HEK293T (cell line): ENCODE measurements at regions of chr11 and their contacts with region 1.

Region 1: GRCh38 chr11:1763796-1764661 is at the start of gene CTSD:
- DNase-seq: peak; percentile 97

Region 2: DNA sequence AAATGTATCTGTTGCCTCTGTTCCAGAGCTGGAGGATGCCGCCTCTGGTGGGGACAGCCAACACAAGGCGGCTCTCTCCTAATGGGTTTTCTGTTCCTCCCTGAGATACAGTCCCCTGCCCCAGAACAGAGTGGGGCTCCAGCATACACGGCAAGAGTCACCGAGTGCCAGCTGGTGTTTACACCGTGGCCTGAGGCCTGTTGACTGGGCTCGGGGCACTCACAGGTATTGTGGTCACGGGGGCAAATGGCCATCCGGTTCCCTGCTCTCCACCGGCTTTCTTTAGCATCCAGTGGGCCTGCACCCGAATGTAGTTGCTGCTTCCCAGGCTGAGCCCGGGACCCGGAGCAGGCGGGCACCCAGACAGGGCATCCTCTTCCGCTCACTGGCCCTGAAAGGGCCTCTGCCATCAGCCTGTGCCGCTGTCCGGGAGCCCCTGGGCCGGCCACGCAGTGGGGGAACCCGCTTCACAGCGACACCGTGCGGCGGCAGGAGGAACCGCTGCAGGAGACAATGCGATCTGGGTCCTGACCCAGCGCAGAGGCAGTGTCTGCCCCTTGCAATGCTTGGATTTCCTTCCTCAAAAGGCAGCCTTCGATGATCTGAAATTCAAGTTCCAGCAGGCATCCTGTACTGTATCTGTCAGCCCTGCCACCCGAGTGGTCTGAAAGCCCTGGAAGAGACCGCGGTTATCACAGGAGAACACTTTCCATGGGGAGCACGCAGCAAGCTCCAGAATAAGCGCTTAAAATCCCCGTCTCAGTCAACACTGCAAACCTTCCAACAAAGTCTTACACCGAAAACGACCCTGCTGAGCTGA is 135.3 kb before region 1 on chr11:
- CTCF ChIA-PET with region 1: no interaction called
- POLR2A ChIA-PET with region 1: no interaction called
- DNase-seq: peak; percentile 89

Region 3: GRCh38 chr11:1682225-1682905 is 81.7 kb before region 1 on chr11:
- CTCF ChIA-PET with region 1: no interaction called
- POLR2A ChIA-PET with region 1: no interaction called
- DNase-seq: no peak

Region 4: GRCh38 chr11:1749414-1750312 is 14.4 kb before region 1 on chr11:
- CTCF ChIA-PET with region 1: no interaction called
- POLR2A ChIA-PET with region 1: interaction called, 10 read pairs
- DNase-seq: no peak

Region 5: GRCh38 chr11:1796413-1797011 is 32.5 kb after region 1 on chr11:
- CTCF ChIA-PET with region 1: no interaction called
- POLR2A ChIA-PET with region 1: no interaction called
- DNase-seq: no peak